Ascending aorta (tissue), 2 donors: ENCODE measurements at regions of chr5 and their contacts with region 1.

Region 1: DNA sequence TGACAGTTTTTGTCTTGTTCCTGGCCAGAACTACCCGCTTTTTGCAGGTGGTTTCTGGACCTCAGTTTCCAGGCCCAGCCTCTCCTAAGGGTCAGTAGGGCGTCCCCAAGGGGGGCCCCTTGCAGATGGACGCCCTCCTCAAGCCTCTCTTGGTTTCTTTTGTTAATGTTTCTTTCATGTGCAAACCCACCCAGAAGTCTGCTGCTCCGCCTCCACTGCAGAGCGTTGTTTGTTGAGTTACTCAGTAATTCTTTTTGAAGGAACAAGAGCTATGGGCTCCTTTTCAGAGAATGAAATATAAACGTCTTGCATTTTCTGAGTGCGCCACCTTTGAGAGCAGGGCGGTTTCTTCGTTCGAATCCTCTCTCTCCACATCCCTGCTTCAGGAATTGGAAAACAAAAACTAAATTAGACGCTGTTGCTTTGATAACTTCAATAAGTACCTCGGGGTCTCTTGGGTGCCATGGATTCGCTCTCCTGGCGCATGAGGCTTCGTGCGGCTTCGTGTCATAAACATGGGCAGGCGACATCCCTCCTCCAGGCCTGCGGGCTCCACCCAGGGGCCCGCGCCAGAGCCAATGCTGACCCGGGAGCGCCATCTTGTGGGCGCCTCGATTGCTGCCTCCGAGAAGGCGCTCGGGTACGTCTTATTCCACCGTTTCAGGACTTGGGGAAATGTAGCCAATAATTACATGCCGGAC is 38.3 kb upstream of the CKMT2 start:
- DNase-seq: peak; percentile 18 to 87
- H3K4me3 ChIP-seq: peak overlapping the region; percentile 12 to 16
- H3K27ac ChIP-seq: no peak overlapping the region
- H3K4me1 ChIP-seq: peaks cover 0 to 5% of the 10 kb centered on the region in 2 donors
- H3K27me3 ChIP-seq: no peaks in the 10 kb centered on the region
- CTCF ChIP-seq: peak; percentile 77 to 89 (median 78)

Region 2: DNA sequence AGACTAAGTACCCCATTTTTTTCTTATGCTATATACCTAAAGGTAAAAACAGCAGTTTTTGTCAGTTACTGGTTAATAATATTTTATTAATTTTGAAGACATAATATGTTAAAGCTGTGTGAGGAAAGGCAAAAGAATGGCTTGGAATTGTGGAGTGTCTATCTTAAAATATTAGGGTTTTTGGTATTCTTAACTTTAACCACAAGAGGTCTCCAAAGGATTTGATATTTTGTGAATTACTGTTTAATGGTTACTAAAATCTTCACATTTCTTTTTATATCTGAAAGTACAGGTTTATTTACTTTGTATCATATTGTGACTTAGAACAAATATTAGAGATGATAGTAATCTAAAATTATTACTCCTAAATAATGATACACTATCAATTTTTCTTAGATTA is 508.0 kb before region 1 on chr5:
- intact Hi-C with region 1: loop called (anchors 5 kb)
- DNase-seq: no peak
- H3K4me3 ChIP-seq: no peak overlapping the region
- H3K27ac ChIP-seq: no peak overlapping the region
- H3K4me1 ChIP-seq: no peaks in the 10 kb centered on the region
- H3K27me3 ChIP-seq: no peaks in the 10 kb centered on the region
- CTCF ChIP-seq: peak in 1 of 3 experiments; percentile 30

Region 3: DNA sequence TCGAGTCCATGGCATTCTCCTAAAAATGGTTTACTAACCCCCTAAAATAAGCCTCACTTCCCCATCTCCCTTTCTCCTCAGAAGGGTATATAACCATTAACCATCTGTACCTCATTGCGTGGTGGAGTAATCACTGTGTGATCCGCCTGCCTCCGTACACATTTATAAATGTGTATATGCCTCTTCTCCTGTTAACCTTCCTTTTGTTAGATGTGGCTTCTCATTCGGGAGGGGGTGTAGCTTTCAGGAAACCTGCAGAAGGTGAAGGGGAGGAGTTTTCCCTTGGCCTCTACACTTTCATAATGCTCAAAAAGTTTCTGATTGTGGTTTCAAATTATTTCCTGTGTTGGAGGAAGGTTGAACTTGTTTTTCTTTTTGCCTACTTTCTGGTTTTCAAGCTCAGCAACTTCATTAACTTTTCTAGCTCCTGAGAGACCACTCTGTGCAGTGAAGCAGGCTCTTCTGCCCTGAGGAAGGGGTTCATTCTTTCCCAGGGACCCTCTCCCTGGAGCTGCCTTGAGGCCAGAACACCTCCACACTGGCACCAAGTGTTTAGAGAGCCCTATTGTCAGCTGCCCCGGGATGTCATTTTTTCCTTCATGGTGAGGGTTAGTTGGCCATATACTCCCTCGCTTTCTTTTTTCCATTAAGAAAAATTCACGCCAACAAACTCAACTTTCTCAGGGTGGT is 187.7 kb before region 1 on chr5:
- intact Hi-C with region 1: no loop called
- DNase-seq: no peak
- H3K4me3 ChIP-seq: no peak overlapping the region
- H3K27ac ChIP-seq: no peak overlapping the region
- H3K4me1 ChIP-seq: no peaks in the 10 kb centered on the region
- H3K27me3 ChIP-seq: no peaks in the 10 kb centered on the region
- CTCF ChIP-seq: no peak

Region 4: GRCh38 chr5:81425569-81425968 is 230.8 kb after region 1 on chr5:
- intact Hi-C with region 1: no loop called
- DNase-seq: no peak
- H3K4me3 ChIP-seq: no peak overlapping the region
- H3K27ac ChIP-seq: peak overlapping the region; percentile 22 to 51
- H3K4me1 ChIP-seq: peaks cover 0 to 6% of the 10 kb centered on the region in 2 donors
- H3K27me3 ChIP-seq: no peaks in the 10 kb centered on the region
- CTCF ChIP-seq: peak; percentile 41 to 62 (median 54)